Pancreas (tissue), 10 donors: ENCODE measurements at regions of chr2 and their contacts with region 1.

Region 1: DNA sequence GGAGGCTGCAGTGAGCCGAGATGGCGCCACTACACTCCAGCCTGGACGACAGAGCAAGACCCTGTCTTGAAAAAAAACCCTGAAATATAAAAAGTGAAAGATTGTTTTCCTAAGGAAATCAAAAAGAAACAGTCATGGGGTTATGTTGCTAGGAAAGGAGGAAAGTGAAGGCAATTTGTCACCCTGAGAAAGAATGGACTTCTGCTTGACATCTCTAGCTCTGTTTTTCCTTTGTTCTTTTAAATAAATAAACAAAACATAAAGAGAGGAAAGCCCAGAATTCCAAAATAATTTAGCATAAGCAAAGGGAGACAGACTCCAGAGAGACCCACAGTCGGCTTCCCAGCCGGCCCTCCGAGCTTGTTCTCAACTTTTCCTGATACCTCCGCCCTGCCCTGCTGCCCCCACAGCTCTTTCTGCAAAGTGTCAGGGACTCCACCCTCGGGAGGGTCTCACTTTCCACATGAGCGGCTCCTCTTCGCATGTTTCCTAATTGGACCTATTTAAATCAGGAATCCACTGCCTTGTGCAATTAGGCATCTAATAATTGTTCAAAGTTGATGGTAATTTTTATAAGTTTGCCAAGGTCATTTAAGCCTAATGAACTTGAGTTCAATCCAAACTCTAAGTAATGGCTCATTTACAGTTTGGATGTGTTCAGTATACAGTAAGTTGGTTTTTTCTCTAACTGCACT is 49.8 kb upstream of the COPS8 start:
- DNase-seq: no peak
- ATAC-seq: no peak
- H3K4me3 ChIP-seq: no peak overlapping the region
- H3K27ac ChIP-seq: no peak overlapping the region
- H3K4me1 ChIP-seq: peaks cover 0 to under 1% (median 0%) of the 10 kb centered on the region in 3 donors
- H3K27me3 ChIP-seq: no peaks in the 10 kb centered on the region
- CTCF ChIP-seq: no peak

Region 2: GRCh38 chr2:236526455-236527158 is 509.3 kb before region 1 on chr2:
- intact Hi-C with region 1: loop called in 1 of 3 experiments (anchors 10 kb)
- DNase-seq: no peak
- ATAC-seq: peak in 2 of 4 donors; percentile 31 to 56
- H3K4me3 ChIP-seq: no peak overlapping the region
- H3K27ac ChIP-seq: no peak overlapping the region
- H3K4me1 ChIP-seq: no peaks in the 10 kb centered on the region
- H3K27me3 ChIP-seq: no peaks in the 10 kb centered on the region
- CTCF ChIP-seq: no peak